ENCODE measurements at regions of chr9 and their contacts with region 1.

Region 1: DNA sequence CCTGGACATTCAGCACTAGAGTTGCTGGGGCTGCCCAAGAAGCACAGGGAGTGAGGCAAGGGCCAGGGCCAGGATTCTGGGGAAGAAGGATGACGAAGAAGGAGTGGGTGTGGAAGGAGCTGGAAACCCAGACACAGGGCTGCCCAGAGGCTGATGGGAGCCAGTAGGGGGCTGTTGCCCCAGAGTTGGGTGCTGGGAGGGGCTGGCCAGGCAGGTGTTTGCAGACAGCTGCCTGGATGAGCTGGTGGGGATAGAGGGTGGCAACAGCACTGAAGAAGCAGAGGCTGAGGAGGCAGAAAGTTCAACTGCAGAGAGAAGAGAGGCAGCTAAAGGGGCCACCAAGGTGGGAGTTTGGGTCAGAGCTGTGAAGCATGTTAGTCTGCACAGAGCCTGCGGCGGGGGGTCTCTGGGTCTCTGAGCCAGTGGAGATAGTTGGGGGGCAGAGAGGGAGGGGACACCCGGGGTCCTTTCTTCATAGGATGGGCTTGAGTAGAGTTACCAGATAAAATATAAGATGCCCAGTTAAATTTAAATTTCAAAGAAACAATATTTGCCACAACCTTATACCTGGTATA is 2.5 kb upstream of the AQP7 start:
- DNase-seq: no peak
- H3K27ac ChIP-seq: peak overlapping the region; percentile 33
- CTCF ChIP-seq: no peak

Region 2: DNA sequence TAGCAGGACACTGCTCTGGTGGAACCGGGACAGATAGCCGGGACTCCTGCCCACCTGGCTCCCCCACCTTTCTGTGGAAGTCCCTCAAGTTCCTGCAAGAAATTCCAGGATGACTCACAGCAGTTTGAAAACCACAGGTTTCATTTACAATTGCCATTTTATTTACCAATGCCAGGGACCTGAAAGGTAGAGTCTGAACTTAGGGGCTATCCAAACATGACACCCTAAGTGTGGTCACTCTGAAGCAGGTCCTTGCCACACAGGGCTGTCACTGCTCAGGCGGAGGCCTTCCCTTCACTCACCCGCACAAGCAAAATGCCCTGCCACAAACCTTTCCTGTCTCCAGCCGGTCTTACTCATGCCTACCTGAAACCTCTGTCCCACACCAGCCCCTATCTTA is 706.1 kb before region 1 on chr9:
- CTCF ChIA-PET with region 1: no interaction called
- POLR2A ChIA-PET with region 1: no interaction called
- DNase-seq: peak; percentile 42
- H3K27ac ChIP-seq: no peak overlapping the region
- CTCF ChIP-seq: no peak

Region 3: GRCh38 chr9:33198165-33198564 is 206.7 kb before region 1 on chr9:
- CTCF ChIA-PET with region 1: no interaction called
- POLR2A ChIA-PET with region 1: no interaction called
- DNase-seq: no peak
- H3K27ac ChIP-seq: no peak overlapping the region
- CTCF ChIP-seq: no peak

Region 4: GRCh38 chr9:33374634-33375213 is 30.2 kb before region 1 on chr9:
- CTCF ChIA-PET with region 1: interaction called, 10 read pairs
- POLR2A ChIA-PET with region 1: no interaction called
- DNase-seq: peak; percentile 86
- H3K27ac ChIP-seq: peak overlapping the region; percentile 50; the same call in 1 of the 2 replicates
- CTCF ChIP-seq: peak; percentile 98

Region 5: DNA sequence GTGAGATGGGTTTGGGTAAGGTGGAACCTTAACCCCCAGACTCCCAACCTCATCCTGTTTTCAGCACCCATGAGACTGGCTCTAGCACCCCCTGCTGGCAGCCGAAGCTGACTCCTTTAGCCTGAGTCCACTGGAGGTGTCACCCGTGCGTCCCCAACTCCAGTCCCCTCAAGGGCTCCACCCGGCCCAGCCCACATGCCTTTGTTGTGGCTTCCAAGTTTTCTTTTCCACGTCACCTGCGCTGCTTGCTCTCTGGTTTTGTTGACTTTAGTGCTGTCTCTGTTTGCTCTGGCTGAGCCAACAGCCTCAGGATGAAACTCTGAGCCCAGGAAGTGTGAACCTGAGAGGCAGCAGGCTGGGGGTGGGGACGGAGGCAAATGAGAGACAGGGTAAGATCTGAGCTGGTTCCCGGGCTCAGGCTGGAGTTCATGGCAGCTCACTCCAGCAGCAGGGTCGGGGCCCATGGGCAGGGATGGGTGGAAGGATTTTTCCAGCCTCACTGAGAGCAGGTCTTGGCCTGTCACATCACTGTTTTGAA is 10.7 kb after region 1 on chr9:
- CTCF ChIA-PET with region 1: interaction called, 11 read pairs
- POLR2A ChIA-PET with region 1: no interaction called
- DNase-seq: peak; percentile 53
- H3K27ac ChIP-seq: peak overlapping the region; percentile 70
- CTCF ChIP-seq: no peak; the same call in 1 of the 2 replicates

Region 6: GRCh38 chr9:33446946-33447798 is 42.3 kb after region 1 on chr9 and contains the start of gene AQP3:
- CTCF ChIA-PET with region 1: interaction called, 10 read pairs
- POLR2A ChIA-PET with region 1: interaction called, 3 read pairs
- DNase-seq: peak; percentile 78
- H3K27ac ChIP-seq: peak within 1 kb of the TSS; percentile 76
- CTCF ChIP-seq: no peak; the same call in none of the 2 replicates

Region 7: DNA sequence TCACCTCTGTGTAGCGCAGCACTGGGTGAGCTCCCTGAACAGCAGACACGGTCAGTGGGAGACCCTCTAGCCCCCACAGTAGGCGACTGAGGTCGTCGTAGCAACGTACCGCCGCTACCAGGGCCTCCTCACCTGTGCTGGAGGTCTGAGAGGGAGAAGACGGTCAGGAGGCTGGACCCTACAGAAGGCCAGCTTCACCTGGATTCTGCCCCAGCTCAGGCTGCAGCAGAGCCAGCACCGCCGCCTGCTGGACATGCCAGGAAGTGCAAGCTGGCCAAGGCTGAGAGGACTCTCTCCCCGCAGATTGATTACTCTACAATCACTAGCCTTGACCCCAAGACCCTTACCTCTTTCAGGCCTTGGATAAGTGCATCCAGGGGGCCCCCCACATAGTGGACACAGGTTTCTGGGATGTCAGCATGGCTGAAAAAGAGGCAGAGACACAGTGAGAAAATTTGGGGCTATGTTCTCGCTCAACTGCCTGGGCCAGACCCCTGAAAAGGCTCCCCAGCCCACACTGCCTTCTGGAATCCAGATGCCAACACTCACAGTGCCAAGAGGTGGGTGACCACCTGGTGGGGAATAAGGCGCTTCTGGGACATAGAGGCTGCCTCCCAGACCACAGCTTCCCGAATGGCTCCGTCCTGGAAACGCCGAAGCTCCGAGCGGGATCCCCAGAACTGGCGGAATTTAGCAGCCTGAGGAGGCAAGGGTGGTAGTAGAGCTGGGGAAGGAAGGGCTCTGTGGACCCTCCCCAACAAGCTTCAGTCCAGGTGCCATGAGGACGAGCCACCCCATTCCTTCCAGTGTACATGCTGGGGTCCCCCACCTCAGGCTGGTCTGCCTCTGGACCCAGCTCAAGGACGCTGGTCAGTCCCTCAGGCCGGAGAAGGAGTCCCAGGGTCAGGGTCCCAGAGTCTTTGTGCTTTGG is 62.0 kb after region 1 on chr9:
- CTCF ChIA-PET with region 1: interaction called, 33 read pairs
- POLR2A ChIA-PET with region 1: no interaction called
- DNase-seq: peak; percentile 65
- H3K27ac ChIP-seq: peak overlapping the region; percentile 61
- CTCF ChIP-seq: peak; percentile 100

Measured in RWPE1 (cell line).